ENCODE measurements at regions of chr9 and their contacts with region 1.

Region 1: GRCh38 chr9:131762356-131762932 is 22.6 kb upstream of the RAPGEF1 start:
- DNase-seq: no peak
- H3K4me3 ChIP-seq: no peak overlapping the region
- H3K27ac ChIP-seq: no peak overlapping the region
- H3K4me1 ChIP-seq: peaks cover 2% of the 10 kb centered on the region
- H3K27me3 ChIP-seq: no peaks in the 10 kb centered on the region
- CTCF ChIP-seq: peak; percentile 46 to 80

Region 2: DNA sequence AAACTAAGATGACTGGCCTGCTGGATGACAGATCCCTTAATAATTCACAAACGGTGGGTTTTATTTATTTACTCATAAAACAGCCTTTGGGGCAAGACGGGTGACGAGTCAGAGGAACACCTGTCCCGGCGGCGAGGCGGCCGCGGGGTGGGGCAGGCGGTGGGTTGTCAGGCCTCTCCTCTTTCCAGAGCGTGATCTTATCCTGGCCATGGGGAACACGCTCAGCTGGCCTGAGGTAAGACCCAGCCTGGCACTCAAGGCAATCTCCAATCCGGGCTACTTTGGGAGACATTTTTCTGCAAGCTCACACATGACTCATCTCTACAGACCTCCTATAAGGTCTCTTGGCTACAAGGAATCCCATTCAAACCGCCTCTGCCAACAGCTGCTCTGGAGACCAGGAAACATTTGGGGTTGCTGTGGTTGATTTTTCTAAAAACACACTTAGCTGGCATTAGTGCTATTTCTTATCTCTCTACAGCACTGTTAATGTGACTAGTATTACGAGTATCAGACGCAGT is 28.8 kb before region 1 on chr9:
- CTCF ChIA-PET with region 1: no interaction called
- dilution Hi-C with region 1: no loop called
- in situ Hi-C with region 1: no loop called
- intact Hi-C with region 1: no loop called
- DNase-seq: peak; percentile 98
- H3K4me3 ChIP-seq: no peak overlapping the region
- H3K27ac ChIP-seq: peak overlapping the region; percentile 88
- H3K4me1 ChIP-seq: peaks cover 63% of the 10 kb centered on the region
- H3K27me3 ChIP-seq: no peaks in the 10 kb centered on the region
- CTCF ChIP-seq: no peak

Region 3: DNA sequence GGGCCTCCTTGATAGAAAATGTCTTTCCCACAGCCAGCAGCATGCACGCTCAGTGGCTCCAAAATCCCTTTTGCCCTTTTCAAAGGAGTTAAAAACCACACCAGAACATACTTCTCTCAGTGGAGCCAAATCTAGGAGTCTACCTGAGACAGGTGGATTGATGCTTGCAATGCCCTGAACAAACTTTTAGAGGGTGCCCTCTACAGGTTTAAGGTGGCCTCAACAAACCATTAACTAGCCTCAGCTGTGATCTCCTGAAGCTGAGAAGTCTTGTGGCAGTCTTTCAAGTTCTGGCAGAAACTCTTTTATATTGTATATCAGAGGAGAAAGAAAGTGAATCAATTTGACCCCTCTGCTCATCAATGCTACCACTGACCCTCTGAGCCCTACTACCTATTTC is 191.9 kb after region 1 on chr9:
- CTCF ChIA-PET with region 1: no interaction called
- dilution Hi-C with region 1: no loop called
- in situ Hi-C with region 1: no loop called
- intact Hi-C with region 1: loop called (anchors 2 kb)
- DNase-seq: peak; percentile 20
- H3K4me3 ChIP-seq: no peak overlapping the region
- H3K27ac ChIP-seq: no peak overlapping the region
- H3K4me1 ChIP-seq: no peaks in the 10 kb centered on the region
- H3K27me3 ChIP-seq: no peaks in the 10 kb centered on the region
- CTCF ChIP-seq: peak; percentile 35 to 58

Region 4: GRCh38 chr9:132160802-132161742 is 398.6 kb after region 1 on chr9:
- CTCF ChIA-PET with region 1: no interaction called
- dilution Hi-C with region 1: no loop called
- in situ Hi-C with region 1: no loop called
- intact Hi-C with region 1: loop called (anchors 5 kb)
- DNase-seq: peak; percentile 57
- H3K4me3 ChIP-seq: peak overlapping the region; percentile 54 to 61 (median 59)
- H3K27ac ChIP-seq: no peak overlapping the region
- H3K4me1 ChIP-seq: peaks cover 17% of the 10 kb centered on the region
- H3K27me3 ChIP-seq: peaks cover 22% of the 10 kb centered on the region
- CTCF ChIP-seq: no peak

Region 5: DNA sequence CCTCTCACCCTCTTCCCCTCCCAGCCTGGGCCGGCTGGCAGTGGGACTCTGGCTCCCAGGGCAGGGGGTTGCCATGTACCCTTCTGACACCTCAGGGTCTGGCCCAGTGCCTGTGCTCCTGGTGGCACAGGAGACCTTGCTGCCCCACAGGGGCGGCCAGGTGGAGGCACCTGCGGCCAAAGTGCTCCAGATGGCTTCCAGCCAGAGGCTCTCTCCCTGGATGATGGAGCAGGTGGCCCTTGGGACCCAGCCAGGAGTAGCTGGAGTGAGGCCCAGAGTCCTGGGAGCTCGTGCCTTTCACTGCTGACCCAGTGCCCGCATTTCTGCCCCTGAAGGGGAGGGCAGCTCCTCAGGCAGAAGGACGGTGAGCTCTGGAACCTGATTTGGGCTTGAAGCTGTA is 486.7 kb after region 1 on chr9:
- CTCF ChIA-PET with region 1: interaction called, 4 read pairs
- dilution Hi-C with region 1: no loop called
- in situ Hi-C with region 1: loop called (anchors 5 to 10 kb)
- intact Hi-C with region 1: loop called (anchors 1 kb)
- DNase-seq: no peak
- H3K4me3 ChIP-seq: no peak overlapping the region
- H3K27ac ChIP-seq: no peak overlapping the region
- H3K4me1 ChIP-seq: no peaks in the 10 kb centered on the region
- H3K27me3 ChIP-seq: no peaks in the 10 kb centered on the region
- CTCF ChIP-seq: no peak

Region 6: GRCh38 chr9:132575005-132575609 is 812.7 kb after region 1 on chr9:
- CTCF ChIA-PET with region 1: no interaction called
- dilution Hi-C with region 1: no loop called
- in situ Hi-C with region 1: no loop called
- intact Hi-C with region 1: loop called (anchors 2 kb)
- DNase-seq: peak; percentile 57
- H3K4me3 ChIP-seq: no peak overlapping the region
- H3K27ac ChIP-seq: no peak overlapping the region
- H3K4me1 ChIP-seq: no peaks in the 10 kb centered on the region
- H3K27me3 ChIP-seq: peaks cover 19% of the 10 kb centered on the region
- CTCF ChIP-seq: peak; percentile 65 to 83